Endothelial cell of umbilical vein (primary cell): ENCODE measurements at regions of chr17 and their contacts with region 1.

Region 1: DNA sequence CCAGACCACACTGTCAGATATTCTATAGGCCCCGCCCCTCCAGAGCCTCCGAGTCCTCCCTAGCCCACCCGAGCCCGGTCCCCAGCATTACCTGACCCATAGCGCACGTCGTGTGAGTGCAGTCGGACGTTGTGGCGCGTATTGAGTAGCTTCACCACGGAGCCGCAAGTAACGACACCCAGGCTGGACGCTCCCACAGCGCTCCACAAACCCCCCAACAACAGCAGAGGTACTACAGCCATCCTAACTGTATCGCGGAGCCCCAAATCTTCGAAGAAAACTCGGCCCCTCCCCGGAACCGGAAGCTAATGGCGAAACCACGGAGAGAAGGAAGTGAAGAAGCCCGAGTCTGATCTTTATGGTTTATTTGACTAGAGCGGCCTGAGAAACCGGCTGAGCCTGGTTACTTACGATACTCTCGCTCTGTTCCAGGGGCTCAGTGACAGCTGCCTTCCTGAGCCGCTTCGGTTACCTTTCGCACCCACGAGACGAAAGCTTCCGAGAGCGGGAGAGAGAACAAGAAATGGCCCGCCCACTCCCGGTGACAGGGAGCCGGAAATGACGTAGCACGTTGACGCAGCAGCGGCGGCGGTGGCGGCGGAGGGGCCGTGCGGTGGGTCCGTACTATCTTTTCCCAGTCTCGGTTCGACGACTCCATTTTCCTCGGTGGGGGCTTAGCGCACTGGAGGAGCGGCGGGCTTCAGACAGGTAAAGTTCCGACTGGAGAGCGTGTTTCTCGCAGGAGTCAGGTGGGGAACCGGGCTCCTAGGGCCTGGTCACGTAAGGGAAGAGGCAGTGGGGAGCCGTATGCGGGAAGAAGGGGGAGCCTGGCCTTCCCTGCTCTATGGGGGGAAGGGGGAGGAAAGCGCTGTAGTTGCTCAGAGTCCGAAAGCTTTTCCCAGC is at the starts of genes SDF2 and SUPT6H:
- DNase-seq: peak; percentile 92
- H3K4me3 ChIP-seq: peak within 1 kb of the TSS; percentile 75 to 95 (median 82)
- H3K27ac ChIP-seq: peak within 1 kb of the TSS; percentile 79
- H3K4me1 ChIP-seq: peaks cover 8% of the 10 kb centered on the region
- H3K27me3 ChIP-seq: no peaks in the 10 kb centered on the region
- CTCF ChIP-seq: no peak
- POLR2A ChIP-seq: peak; percentile 5
- total RNA-seq, gene SDF2: 52.6 and 56.4 TPM in 2 replicates
- total RNA-seq, gene SUPT6H: 70.4 and 79.2 TPM in 2 replicates

Region 2: GRCh38 chr17:28710861-28711722 is 49.2 kb after region 1 on chr17:
- CTCF ChIA-PET with region 1: no interaction called
- POLR2A ChIA-PET with region 1: no interaction called
- dilution Hi-C with region 1: no loop called
- intact Hi-C with region 1: loop called (anchors 5 kb)
- DNase-seq: peak; percentile 93
- H3K4me3 ChIP-seq: peak overlapping the region; percentile 3 to 55 (median 39)
- H3K27ac ChIP-seq: peak overlapping the region; percentile 43
- H3K4me1 ChIP-seq: peaks cover 6% of the 10 kb centered on the region
- H3K27me3 ChIP-seq: no peaks in the 10 kb centered on the region
- CTCF ChIP-seq: no peak
- POLR2A ChIP-seq: peak; percentile 97

Region 3: DNA sequence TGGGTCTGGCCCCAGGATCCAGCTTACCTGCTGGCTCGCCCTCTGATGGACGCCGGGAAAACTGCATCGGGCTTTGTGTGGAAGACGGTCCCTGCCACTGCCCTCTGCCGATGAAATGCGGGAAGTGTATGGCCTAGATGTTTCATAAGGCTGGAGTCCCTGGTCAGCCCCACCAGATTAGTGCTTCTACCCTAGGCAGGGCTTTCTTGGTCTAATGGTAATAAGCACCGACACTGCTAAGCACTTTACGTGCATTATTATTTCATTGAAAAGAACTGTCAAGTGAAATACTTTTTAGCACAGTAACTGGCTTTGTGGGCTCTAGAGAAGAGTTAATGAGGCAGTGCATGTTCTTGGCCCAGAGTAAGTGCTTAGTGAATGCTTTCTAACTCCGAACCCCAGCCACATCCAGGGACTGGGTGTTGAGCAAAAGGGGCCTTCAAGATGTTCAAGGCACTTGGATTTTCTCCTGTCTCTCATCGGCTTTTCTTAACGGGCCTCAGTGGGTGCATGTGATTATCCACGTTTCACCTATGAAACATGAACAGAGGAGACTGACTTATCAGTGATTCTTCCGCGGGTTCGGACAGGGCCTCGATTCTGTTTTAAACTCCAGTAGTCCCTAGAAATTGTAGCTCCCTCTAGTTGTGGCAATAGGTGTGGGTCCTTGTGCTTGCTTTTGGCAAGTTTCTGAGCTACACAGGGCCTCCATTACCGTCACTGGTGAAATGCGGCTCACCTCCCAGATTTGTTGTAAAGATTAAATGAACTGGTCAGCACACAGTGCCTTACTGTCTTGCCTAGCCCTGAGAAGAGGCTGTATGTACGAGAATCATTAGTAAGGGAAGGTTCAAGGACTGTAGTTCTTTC is 88.5 kb after region 1 on chr17:
- CTCF ChIA-PET with region 1: no interaction called
- POLR2A ChIA-PET with region 1: no interaction called
- dilution Hi-C with region 1: no loop called
- intact Hi-C with region 1: no loop called
- DNase-seq: peak; percentile 91
- H3K4me3 ChIP-seq: no peak overlapping the region
- H3K27ac ChIP-seq: no peak overlapping the region
- H3K4me1 ChIP-seq: peaks cover 22% of the 10 kb centered on the region
- H3K27me3 ChIP-seq: no peaks in the 10 kb centered on the region
- CTCF ChIP-seq: peak; percentile 99 to 100
- POLR2A ChIP-seq: no peak

Region 4: DNA sequence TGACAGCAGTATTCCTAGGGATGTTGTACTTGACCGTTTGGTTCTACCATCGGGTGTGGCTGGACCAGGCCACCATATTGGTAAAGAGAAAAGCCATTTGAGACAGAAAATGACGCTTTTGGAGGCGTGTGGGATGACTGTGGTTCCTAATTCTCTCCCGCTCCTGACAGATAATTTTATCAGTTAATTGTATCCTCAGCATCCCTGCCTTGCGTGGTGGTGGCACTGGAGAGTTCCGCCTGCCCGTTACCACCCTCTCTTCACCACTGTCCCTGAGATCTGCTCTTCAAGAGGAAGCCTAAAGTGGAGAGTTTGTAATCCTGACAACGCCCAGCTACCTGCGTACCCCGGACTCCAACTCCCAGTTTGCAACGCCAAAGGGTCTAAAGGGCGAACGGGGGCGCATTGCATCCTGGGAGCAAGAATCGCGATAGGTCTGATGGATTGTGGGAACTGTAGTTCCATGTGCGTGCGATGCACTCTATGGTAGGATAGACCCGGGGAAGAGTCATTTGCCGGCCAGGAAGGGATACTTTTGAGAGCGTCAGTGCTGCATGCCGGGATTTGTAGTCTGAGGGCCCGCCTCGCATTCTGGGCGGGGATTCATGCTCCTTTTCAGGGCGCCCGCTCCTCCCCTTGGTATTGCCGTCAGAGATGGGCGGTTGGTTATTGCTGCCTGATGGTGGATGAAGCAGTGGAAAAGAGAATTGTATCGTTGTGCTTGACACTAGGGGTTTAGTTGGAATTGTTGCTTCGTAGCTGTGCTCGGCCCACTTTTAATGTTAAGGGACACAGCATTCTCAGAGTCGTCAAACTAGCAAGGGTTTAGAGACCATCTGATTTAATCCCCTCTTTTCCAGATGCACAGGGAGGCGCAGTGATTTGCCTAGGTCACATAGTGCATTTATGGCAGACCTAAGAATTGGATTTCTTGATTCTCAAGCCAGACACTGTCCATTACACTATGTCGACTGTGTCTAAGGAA is 290.4 kb after region 1 on chr17:
- CTCF ChIA-PET with region 1: no interaction called
- POLR2A ChIA-PET with region 1: no interaction called
- dilution Hi-C with region 1: no loop called
- intact Hi-C with region 1: no loop called
- DNase-seq: peak; percentile 100
- H3K4me3 ChIP-seq: peak overlapping the region in 2 of 3 experiments; percentile 65 to 72
- H3K27ac ChIP-seq: peak overlapping the region; percentile 80
- H3K4me1 ChIP-seq: peaks cover 17% of the 10 kb centered on the region
- H3K27me3 ChIP-seq: no peaks in the 10 kb centered on the region
- CTCF ChIP-seq: no peak
- POLR2A ChIP-seq: peak; percentile 17